ENCODE measurements at regions of chr19 and their contacts with region 1.

Region 1: GRCh38 chr19:46697204-46697960 is 19.5 kb downstream of the PRKD2 start:
- DNase-seq: peak; percentile 83 to 92 (median 91)
- ATAC-seq: peak; percentile 95 to 99 (median 97)
- H3K4me3 ChIP-seq: peak overlapping the region in 4 of 12 donors; percentile 5 to 34 (median 22)
- H3K27ac ChIP-seq: no peak overlapping the region
- H3K4me1 ChIP-seq: peaks cover 0 to 13% (median 3%) of the 10 kb centered on the region in 12 donors
- H3K27me3 ChIP-seq: no peaks in the 10 kb centered on the region
- CTCF ChIP-seq: no peak
- POLR2A ChIP-seq: no peak

Region 2: DNA sequence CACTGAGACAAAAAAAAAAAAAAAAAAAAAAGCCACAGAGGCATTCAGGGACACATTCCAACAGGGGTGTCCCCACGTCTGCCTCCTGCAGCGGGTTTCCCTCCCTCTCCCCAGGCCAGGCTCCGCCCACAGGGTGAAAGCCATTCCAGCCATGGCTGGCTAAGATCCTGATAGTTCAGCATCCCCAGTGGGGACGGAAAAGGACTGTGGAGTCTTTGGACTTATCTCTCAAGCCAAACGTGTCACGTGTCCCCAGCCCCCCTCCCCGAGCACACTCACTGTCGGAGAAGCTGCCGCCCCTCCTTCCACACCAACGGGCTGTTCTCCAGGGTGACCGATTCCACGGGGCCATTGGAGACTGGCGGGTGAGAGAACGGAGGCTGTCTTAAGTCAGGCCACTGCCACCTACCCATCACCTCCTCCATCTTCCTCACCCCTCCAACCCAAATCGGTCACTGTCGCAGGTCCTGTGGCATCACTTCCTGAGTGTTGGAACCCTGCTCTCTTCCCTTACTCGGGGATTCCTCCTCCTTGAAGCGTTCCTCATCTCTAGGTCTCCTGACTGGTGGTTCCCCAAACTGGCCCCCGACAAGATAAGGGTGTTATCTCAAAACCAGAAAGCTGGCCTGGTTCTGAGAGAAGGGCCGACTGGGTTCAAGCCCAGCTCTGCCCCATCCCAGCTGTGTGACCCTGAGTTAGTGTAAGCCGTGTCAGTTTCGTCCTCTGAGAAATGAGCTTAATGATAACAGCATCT is 39.3 kb after region 1 on chr19:
- intact Hi-C with region 1: loop called in 2 of 10 experiments (anchors 5 kb)
- DNase-seq: peak; percentile 69 to 80 (median 77)
- ATAC-seq: peak in 2 of 4 donors; percentile 21 to 50
- H3K4me3 ChIP-seq: no peak overlapping the region
- H3K27ac ChIP-seq: peak overlapping the region in 9 of 12 donors; percentile 4 to 63 (median 39)
- H3K4me1 ChIP-seq: peaks cover 3 to 93% (median 54%) of the 10 kb centered on the region in 12 donors
- H3K27me3 ChIP-seq: no peaks in the 10 kb centered on the region
- CTCF ChIP-seq: no peak
- POLR2A ChIP-seq: no peak

Measured in heart left ventricle (tissue), 16 donors.